ENCODE measurements at regions of chr11 and their contacts with region 1.

Region 1: DNA sequence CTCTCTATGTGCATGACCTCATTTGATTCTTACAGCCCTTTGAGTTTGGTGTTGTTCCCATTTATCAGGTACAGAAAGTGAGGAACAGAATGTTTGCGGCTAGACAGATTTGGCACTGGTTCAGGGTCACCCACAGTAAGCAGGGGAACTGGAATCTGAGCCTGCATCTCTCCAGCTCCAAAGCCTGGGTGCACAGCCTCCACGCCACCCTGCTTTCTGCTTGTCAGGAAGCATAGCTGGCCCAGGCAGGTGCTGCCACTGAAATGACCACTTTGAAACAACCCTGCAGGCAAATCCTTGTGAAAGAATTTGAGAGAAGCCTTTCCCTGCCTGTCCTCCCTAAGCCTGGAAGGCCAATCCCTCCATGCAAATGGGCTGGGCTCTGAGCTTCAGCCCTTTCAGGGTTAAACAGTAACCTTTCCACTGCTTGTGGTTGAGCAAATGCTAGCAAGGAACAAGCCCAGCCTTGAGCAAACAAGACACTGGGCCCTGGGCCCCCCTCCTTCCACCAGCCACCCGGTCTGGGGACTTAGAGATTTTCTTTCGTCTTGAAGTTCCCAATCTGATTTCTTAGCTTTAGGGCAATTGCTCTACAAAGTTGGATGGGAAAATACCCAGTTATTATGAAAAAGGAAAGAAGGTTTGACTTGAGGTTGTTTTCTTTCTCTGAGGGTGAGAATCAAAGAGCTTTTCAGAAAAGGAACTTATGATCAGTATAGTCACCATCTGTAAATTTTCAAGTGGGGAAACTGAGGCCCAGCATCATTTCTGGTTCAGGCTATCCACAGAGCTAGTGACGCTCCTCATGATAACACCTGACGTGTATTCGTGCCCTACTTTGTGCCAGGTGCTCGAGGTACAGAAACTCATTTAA is 19.4 kb downstream of the EHF start:
- DNase-seq: peak in 2 of 3 donors; percentile 45 to 71
- ATAC-seq: peak; percentile 91 to 96 (median 93)
- H3K4me3 ChIP-seq: no peak overlapping the region
- H3K27ac ChIP-seq: peak overlapping the region in 2 of 3 donors; percentile 9 to 73
- H3K4me1 ChIP-seq: peaks cover 0 to 32% (median 9%) of the 10 kb centered on the region in 4 donors
- H3K27me3 ChIP-seq: no peaks in the 10 kb centered on the region
- CTCF ChIP-seq: no peak
- POLR2A ChIP-seq: no peak

Region 2: DNA sequence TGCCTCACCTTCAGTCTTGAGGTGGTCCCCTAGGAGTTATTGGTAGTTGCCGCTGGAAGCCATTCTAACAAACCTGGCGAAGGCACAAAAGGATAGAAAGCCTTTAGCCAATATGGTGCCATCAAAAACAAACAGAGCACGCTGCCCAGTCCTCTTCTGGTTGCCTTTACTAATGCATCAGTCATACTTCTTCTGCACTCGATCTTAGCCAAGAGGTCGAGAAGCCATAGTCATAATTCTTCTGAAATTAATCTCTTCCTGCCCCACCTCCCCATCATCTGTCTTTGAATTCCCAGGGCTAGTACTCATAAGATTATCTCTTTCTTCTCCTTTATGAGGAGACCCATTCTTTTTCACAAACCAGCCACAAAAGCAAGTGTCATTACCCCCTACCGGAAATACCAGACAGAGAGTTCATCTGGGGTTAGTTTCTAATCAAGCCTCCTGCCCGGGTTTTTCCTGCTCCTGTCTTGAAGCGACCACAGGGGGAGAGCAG is 40.8 kb before region 1 on chr11:
- intact Hi-C with region 1: loop called in 1 of 2 experiments (anchors 10 kb)
- DNase-seq: no peak
- ATAC-seq: peak in 1 of 4 donors; percentile 10
- H3K4me3 ChIP-seq: no peak overlapping the region
- H3K27ac ChIP-seq: no peak overlapping the region
- H3K4me1 ChIP-seq: peaks cover 0 to 13% (median 6%) of the 10 kb centered on the region in 4 donors
- H3K27me3 ChIP-seq: no peaks in the 10 kb centered on the region
- CTCF ChIP-seq: no peak
- POLR2A ChIP-seq: no peak